Aorta (tissue), 5 donors: ENCODE measurements at regions of chr19 and their contacts with region 1.

Region 1: GRCh38 chr19:34974646-34975045 is 10.6 kb upstream of the ZNF792 start:
- DNase-seq: no peak
- ATAC-seq: no peak
- H3K4me3 ChIP-seq: no peak overlapping the region
- H3K27ac ChIP-seq: no peak overlapping the region
- H3K4me1 ChIP-seq: no peaks in the 10 kb centered on the region
- H3K27me3 ChIP-seq: no peaks in the 10 kb centered on the region

Region 2: GRCh38 chr19:35013031-35013819 is 38.6 kb after region 1 on chr19:
- intact Hi-C with region 1: loop called (anchors 1 to 2 kb)
- DNase-seq: peak; percentile 84 to 93
- ATAC-seq: peak; percentile 78
- H3K4me3 ChIP-seq: no peak overlapping the region
- H3K27ac ChIP-seq: no peak overlapping the region
- H3K4me1 ChIP-seq: no peaks in the 10 kb centered on the region
- H3K27me3 ChIP-seq: no peaks in the 10 kb centered on the region

Region 3: GRCh38 chr19:35030257-35031071 is 55.8 kb after region 1 on chr19 and contains the start of gene SCN1B:
- intact Hi-C with region 1: no loop called
- DNase-seq: peak; percentile 81 to 93
- ATAC-seq: peak; percentile 79
- H3K4me3 ChIP-seq: peak within 1 kb of the TSS; percentile 71 to 87
- H3K27ac ChIP-seq: no peak within 1 kb of the TSS
- H3K4me1 ChIP-seq: no peaks in the 10 kb centered on the region
- H3K27me3 ChIP-seq: no peaks in the 10 kb centered on the region
- total RNA-seq, gene SCN1B: 11.9 to 21.4 TPM

Region 4: GRCh38 chr19:35090506-35091237 is 116.0 kb after region 1 on chr19:
- intact Hi-C with region 1: loop called (anchors 5 kb)
- DNase-seq: no peak
- ATAC-seq: peak; percentile 65
- H3K4me3 ChIP-seq: no peak overlapping the region
- H3K27ac ChIP-seq: no peak overlapping the region
- H3K4me1 ChIP-seq: no peaks in the 10 kb centered on the region
- H3K27me3 ChIP-seq: no peaks in the 10 kb centered on the region